PC-9 (cell line): ENCODE measurements at regions of chr1 and their contacts with region 1.

Region 1: GRCh38 chr1:27992276-27992675 is 32.5 kb downstream of the XKR8 start:
- DNase-seq: no peak
- H3K4me3 ChIP-seq: no peak overlapping the region
- H3K27ac ChIP-seq: no peak overlapping the region
- H3K4me1 ChIP-seq: no peaks in the 10 kb centered on the region
- H3K27me3 ChIP-seq: no peaks in the 10 kb centered on the region
- CTCF ChIP-seq: no peak

Region 2: DNA sequence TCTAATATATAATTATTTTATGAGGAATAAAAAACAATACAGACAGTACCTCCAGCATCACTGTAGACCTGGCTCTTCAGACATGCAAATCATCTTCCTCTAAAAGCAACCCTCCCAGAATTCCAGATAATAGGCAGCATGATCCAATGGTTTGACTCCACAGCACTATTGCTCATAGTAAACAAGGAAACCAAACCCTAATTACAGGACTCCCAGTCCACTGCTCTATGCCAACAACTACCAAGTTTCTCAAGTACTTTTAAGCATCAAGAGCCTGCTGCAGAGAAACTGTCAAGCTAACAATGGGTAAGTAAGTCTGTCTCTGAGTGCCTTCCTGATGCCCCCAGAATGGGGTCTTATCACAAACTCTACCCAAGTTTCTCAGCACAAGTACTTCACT is 38.9 kb after region 1 on chr1:
- CTCF ChIA-PET with region 1: no interaction called
- POLR2A ChIA-PET with region 1: no interaction called
- intact Hi-C with region 1: no loop called
- DNase-seq: no peak
- H3K4me3 ChIP-seq: no peak overlapping the region
- H3K27ac ChIP-seq: no peak overlapping the region
- H3K4me1 ChIP-seq: no peaks in the 10 kb centered on the region
- H3K27me3 ChIP-seq: no peaks in the 10 kb centered on the region
- CTCF ChIP-seq: no peak

Region 3: DNA sequence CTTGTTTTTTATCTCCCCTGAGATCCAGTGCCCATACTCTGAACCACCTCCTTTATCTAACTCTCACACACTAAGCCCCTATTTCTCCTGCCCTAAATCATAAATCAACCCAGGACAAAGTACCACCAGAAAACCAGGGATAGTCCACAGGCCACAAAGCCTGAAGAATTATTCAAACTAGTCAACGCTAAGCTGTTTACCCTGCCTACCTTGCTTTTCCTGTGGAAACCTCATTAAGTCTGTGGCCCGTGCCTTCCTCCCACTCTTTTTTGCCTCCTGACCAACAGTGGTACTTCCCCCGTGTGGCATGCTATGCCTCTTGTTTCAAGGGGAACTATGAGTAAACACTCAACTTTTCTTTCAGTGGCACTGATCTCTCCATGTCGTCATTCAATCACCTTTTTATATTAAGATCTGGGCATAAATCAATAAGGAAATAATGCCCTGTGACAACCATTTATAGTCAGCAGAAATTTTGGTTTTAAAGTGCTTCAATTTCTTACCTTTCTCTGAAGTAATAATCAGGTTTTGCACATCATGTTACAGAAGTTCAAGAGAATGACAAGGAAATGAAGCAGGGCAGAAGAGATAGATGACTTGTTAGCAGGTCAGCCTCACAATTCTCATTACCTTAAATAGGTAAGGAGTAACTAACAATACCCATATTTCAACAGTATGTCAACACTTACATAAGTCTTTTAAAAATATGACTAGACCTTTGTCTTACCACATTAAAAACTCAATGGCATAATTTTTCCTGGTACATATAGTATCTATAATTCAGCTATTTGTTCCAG is 64.1 kb after region 1 on chr1:
- CTCF ChIA-PET with region 1: no interaction called
- POLR2A ChIA-PET with region 1: no interaction called
- intact Hi-C with region 1: loop called (anchors 2 kb)
- DNase-seq: no peak
- H3K4me3 ChIP-seq: no peak overlapping the region
- H3K27ac ChIP-seq: no peak overlapping the region
- H3K4me1 ChIP-seq: 0 out of 2 replicates have a peak, but pooled peaks cover 5% of the 10 kb centered on the region
- H3K27me3 ChIP-seq: no peaks in the 10 kb centered on the region
- CTCF ChIP-seq: no peak

Region 4: GRCh38 chr1:28208818-28209441 is 216.7 kb after region 1 on chr1:
- CTCF ChIA-PET with region 1: no interaction called
- POLR2A ChIA-PET with region 1: no interaction called
- intact Hi-C with region 1: loop called (anchors 10 kb)
- DNase-seq: peak; percentile 41 to 49
- H3K4me3 ChIP-seq: no peak overlapping the region
- H3K27ac ChIP-seq: no peak overlapping the region
- H3K4me1 ChIP-seq: no peaks in the 10 kb centered on the region
- H3K27me3 ChIP-seq: no peaks in the 10 kb centered on the region
- CTCF ChIP-seq: peak; percentile 76